ENCODE measurements at regions of chr5 and their contacts with region 1.

Region 1: GRCh38 chr5:143002459-143003328 is 232.5 kb downstream of the ARHGAP26 start:
- DNase-seq: peak; percentile 16 to 94 (median 58)
- ATAC-seq: peak; percentile 85
- H3K4me3 ChIP-seq: peak overlapping the region in 1 of 2 experiments; percentile 1
- H3K4me3 Mint-ChIP-seq: peak overlapping the region; percentile 56
- H3K27ac ChIP-seq: peak overlapping the region; percentile 83 to 89
- H3K27ac Mint-ChIP-seq: peak overlapping the region; percentile 87
- H3K4me1 ChIP-seq: peaks cover 43% of the 10 kb centered on the region
- H3K4me1 Mint-ChIP-seq: peaks cover 70% of the 10 kb centered on the region
- H3K27me3 ChIP-seq: no peaks in the 10 kb centered on the region
- H3K27me3 Mint-ChIP-seq: no peaks in the 10 kb centered on the region
- CTCF ChIP-seq: peak; percentile 70

Region 2: GRCh38 chr5:142922223-142922952 is 80.3 kb before region 1 on chr5:
- CTCF ChIA-PET with region 1: interaction called, 8 read pairs
- POLR2A ChIA-PET with region 1: interaction called, 11 read pairs
- intact Hi-C with region 1: no loop called
- DNase-seq: peak in 2 of 9 experiments; percentile 50 to 67
- ATAC-seq: no peak
- H3K4me3 ChIP-seq: no peak overlapping the region
- H3K4me3 Mint-ChIP-seq: no peak overlapping the region
- H3K27ac ChIP-seq: peak overlapping the region in 1 of 2 experiments; percentile 21
- H3K27ac Mint-ChIP-seq: peak overlapping the region; percentile 37
- H3K4me1 ChIP-seq: peaks cover 7% of the 10 kb centered on the region
- H3K4me1 Mint-ChIP-seq: peaks cover 34% of the 10 kb centered on the region
- H3K27me3 ChIP-seq: no peaks in the 10 kb centered on the region
- H3K27me3 Mint-ChIP-seq: no peaks in the 10 kb centered on the region
- CTCF ChIP-seq: no peak

Region 3: DNA sequence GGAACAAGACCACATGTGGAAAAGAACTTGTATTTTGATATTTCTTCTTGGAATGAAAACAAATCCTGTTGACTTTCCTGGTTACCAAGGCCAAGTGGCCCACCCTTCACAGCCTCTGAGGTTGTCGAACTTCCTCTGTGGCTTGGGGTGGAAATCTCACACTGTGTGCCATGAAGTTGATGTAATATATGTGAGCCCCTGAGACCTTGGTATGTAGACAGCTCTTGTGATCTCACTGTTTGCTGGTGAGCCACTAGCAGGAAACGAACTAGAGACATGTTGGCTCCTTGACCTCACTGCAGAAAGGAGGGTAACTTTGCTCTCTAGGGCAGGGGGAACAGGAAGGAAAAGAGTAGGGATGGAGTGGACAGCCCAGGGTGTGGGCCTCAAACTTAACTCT is 73.1 kb before region 1 on chr5:
- CTCF ChIA-PET with region 1: no interaction called
- POLR2A ChIA-PET with region 1: interaction called, 3 read pairs
- intact Hi-C with region 1: loop called in 1 of 2 experiments (anchors 2 kb)
- DNase-seq: peak in 8 of 9 experiments; percentile 11 to 87 (median 44)
- ATAC-seq: peak; percentile 77
- H3K4me3 ChIP-seq: no peak overlapping the region
- H3K4me3 Mint-ChIP-seq: no peak overlapping the region
- H3K27ac ChIP-seq: peak overlapping the region; percentile 27 to 72
- H3K27ac Mint-ChIP-seq: peak overlapping the region; percentile 90
- H3K4me1 ChIP-seq: peaks cover 13% of the 10 kb centered on the region
- H3K4me1 Mint-ChIP-seq: peaks cover 53% of the 10 kb centered on the region
- H3K27me3 ChIP-seq: no peaks in the 10 kb centered on the region
- H3K27me3 Mint-ChIP-seq: no peaks in the 10 kb centered on the region
- CTCF ChIP-seq: no peak

Region 4: DNA sequence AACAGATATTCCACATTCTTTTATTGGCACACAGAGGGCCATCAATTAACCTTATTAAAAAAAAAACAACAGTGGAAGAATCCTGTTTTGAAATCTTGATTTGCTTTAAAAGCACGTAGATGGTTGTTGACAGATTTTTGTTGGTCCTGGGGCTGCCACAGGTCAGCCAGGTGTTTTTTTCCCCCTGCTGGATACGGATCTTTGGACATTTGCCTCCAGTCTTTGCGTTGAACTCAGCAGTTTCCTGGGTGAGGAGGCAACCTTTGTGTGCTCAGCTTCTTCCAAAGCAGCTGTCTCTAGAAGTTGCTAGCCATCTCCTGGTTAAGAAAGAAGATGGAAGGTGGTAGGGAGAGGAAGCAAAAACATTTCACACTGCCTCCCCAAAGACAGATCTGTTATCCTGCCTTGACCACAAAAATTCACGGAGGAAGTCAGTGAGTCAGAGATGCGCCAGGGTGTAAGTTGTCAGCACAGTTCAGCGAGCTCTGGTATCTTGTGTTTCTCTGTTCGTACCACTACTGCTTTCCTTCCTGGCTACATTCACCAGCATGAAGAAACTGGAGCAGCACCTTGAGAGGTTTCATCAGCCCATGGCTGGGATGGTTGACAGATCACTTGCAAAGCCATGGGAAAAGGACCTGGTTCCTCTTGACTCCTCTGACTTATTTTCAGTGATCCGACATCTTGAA is 25.2 kb before region 1 on chr5:
- CTCF ChIA-PET with region 1: interaction called, 8 read pairs
- POLR2A ChIA-PET with region 1: interaction called, 9 read pairs
- intact Hi-C with region 1: loop called in 1 of 2 experiments (anchors 2 kb)
- DNase-seq: peak; percentile 22 to 93 (median 60)
- ATAC-seq: peak; percentile 94
- H3K4me3 ChIP-seq: no peak overlapping the region
- H3K4me3 Mint-ChIP-seq: peak overlapping the region; percentile 59
- H3K27ac ChIP-seq: peak overlapping the region; percentile 3 to 88
- H3K27ac Mint-ChIP-seq: peak overlapping the region; percentile 83
- H3K4me1 ChIP-seq: peaks cover 57% of the 10 kb centered on the region
- H3K4me1 Mint-ChIP-seq: peaks cover 80% of the 10 kb centered on the region
- H3K27me3 ChIP-seq: no peaks in the 10 kb centered on the region
- H3K27me3 Mint-ChIP-seq: no peaks in the 10 kb centered on the region
- CTCF ChIP-seq: no peak

Region 5: GRCh38 chr5:142984525-142984924 is 18.2 kb before region 1 on chr5:
- CTCF ChIA-PET with region 1: interaction called, 11 read pairs
- POLR2A ChIA-PET with region 1: interaction called, 8 read pairs
- intact Hi-C with region 1: no loop called
- DNase-seq: peak in 1 of 9 experiments; percentile 44
- ATAC-seq: peak; percentile 6
- H3K4me3 ChIP-seq: no peak overlapping the region
- H3K4me3 Mint-ChIP-seq: no peak overlapping the region
- H3K27ac ChIP-seq: no peak overlapping the region
- H3K27ac Mint-ChIP-seq: no peak overlapping the region
- H3K4me1 ChIP-seq: peaks cover 22% of the 10 kb centered on the region
- H3K4me1 Mint-ChIP-seq: peaks cover 49% of the 10 kb centered on the region
- H3K27me3 ChIP-seq: no peaks in the 10 kb centered on the region
- H3K27me3 Mint-ChIP-seq: no peaks in the 10 kb centered on the region
- CTCF ChIP-seq: no peak

Region 6: DNA sequence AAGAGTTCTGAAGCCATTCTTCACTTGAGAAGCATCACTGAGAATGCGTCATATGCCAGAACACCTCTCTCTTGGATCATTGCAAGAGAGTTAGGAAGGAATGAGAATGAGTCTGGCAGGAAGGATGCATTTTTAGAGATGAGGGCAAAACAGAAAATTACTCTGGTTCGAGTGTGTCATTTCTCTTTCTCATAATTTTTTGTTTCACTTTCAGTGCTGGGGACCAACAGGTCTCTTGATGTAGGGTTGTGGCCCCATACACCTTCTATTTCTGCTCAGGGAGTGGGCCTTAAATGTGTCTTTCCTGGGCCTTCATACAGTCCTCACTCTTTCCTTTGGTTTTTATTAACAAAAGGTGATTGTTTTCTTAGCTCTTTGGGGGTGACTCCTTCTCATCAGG is 98.4 kb after region 1 on chr5:
- CTCF ChIA-PET with region 1: no interaction called
- POLR2A ChIA-PET with region 1: no interaction called
- intact Hi-C with region 1: no loop called
- DNase-seq: peak in 1 of 9 experiments; percentile 26
- ATAC-seq: no peak
- H3K4me3 ChIP-seq: no peak overlapping the region
- H3K4me3 Mint-ChIP-seq: no peak overlapping the region
- H3K27ac ChIP-seq: peak overlapping the region in 1 of 2 experiments; percentile 50
- H3K27ac Mint-ChIP-seq: peak overlapping the region; percentile 57
- H3K4me1 ChIP-seq: no peaks in the 10 kb centered on the region
- H3K4me1 Mint-ChIP-seq: peaks cover 20% of the 10 kb centered on the region
- H3K27me3 ChIP-seq: no peaks in the 10 kb centered on the region
- H3K27me3 Mint-ChIP-seq: no peaks in the 10 kb centered on the region
- CTCF ChIP-seq: no peak

Region 7: DNA sequence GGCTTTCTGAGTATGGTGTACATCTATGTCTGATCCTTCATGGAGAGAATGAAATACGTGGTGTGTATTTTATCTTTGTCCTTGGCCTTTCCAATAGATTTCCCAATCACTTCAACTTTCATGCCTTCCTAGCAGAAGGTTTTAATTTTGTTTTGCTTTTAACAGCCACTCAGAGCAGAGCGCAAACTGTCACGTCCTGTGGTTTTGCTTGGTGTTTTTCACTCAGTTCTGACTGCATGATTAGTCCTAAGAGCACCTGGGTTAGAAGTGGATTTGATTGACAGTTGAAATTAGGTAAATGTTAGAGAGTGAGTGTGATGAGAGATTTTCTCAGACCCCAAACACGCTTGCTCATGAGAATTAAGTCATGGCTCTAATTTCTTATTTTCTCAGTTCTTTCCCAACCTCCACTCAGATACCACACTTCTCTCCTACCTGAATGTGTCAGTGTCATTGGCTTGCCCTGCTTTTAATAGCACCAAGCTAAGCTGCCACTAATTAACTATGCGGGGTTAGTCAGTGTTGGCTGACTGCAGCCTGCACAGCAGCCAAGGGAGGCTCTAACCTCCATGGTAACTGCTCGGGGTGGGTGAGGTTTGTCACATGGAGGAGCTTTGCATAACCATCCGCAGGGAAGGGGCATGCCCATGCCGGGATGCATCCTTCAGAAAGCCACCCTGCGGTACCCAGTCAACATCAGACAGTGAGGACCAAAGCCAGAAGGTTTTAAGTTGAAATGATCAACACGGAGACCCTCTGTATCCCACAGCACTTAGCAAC is 227.4 kb after region 1 on chr5:
- CTCF ChIA-PET with region 1: no interaction called
- POLR2A ChIA-PET with region 1: no interaction called
- intact Hi-C with region 1: loop called in 1 of 2 experiments (anchors 5 kb)
- DNase-seq: peak in 6 of 9 experiments; percentile 14 to 77 (median 52)
- ATAC-seq: peak; percentile 89
- H3K4me3 ChIP-seq: peak overlapping the region in 1 of 2 experiments; percentile 28
- H3K4me3 Mint-ChIP-seq: peak overlapping the region; percentile 75
- H3K27ac ChIP-seq: peak overlapping the region in 1 of 2 experiments; percentile 58
- H3K27ac Mint-ChIP-seq: peak overlapping the region; percentile 88
- H3K4me1 ChIP-seq: peaks cover 17% of the 10 kb centered on the region
- H3K4me1 Mint-ChIP-seq: peaks cover 29% of the 10 kb centered on the region
- H3K27me3 ChIP-seq: no peaks in the 10 kb centered on the region
- H3K27me3 Mint-ChIP-seq: no peaks in the 10 kb centered on the region
- CTCF ChIP-seq: no peak

Region 8: DNA sequence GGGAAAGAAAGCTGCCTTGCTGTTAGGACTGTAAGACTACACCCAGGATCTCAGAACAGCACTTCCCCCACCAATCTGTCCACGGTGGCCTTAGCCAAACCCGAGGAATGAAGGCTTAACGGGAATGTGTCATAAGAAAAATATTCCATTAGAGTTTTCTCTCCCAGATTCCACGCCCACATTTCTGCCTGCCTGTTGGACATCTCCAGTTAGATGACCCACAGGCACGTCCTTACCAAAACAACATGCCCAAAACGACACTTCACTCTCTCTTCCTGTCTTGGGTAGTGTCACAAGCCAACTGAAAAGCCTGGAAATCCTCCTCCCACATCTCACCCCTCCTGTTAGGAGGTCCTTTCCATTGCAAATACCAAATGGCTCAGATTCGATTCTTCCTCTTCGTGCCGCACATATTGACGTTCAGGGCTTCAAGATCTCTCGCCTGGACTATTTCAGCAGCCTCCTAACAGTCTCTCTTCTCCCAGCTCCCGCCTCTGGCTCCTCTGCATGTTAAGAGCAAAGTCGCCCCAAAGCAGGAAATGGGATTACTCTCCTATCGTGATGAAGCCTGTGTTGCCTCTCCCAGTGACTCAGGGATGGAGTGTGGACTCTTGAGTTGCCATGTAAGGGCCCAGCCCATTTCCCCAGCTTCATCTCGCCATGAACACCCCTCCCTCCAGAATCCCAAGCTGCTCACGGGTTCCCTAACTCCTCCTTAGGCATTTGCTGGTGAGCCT is 241.5 kb after region 1 on chr5:
- CTCF ChIA-PET with region 1: no interaction called
- POLR2A ChIA-PET with region 1: no interaction called
- intact Hi-C with region 1: no loop called
- DNase-seq: no peak
- ATAC-seq: no peak
- H3K4me3 ChIP-seq: no peak overlapping the region
- H3K4me3 Mint-ChIP-seq: no peak overlapping the region
- H3K27ac ChIP-seq: no peak overlapping the region
- H3K27ac Mint-ChIP-seq: no peak overlapping the region
- H3K4me1 ChIP-seq: no peaks in the 10 kb centered on the region
- H3K4me1 Mint-ChIP-seq: no peaks in the 10 kb centered on the region
- H3K27me3 ChIP-seq: no peaks in the 10 kb centered on the region
- H3K27me3 Mint-ChIP-seq: no peaks in the 10 kb centered on the region
- CTCF ChIP-seq: no peak

Region 9: GRCh38 chr5:143968011-143968878 is 965.6 kb after region 1 on chr5:
- CTCF ChIA-PET with region 1: no interaction called
- POLR2A ChIA-PET with region 1: no interaction called
- intact Hi-C with region 1: loop called in 1 of 2 experiments (anchors 10 kb)
- DNase-seq: peak in 2 of 9 experiments; percentile 27 to 52
- ATAC-seq: no peak
- H3K4me3 ChIP-seq: no peak overlapping the region
- H3K4me3 Mint-ChIP-seq: no peak overlapping the region
- H3K27ac ChIP-seq: no peak overlapping the region
- H3K27ac Mint-ChIP-seq: no peak overlapping the region
- H3K4me1 ChIP-seq: no peaks in the 10 kb centered on the region
- H3K4me1 Mint-ChIP-seq: no peaks in the 10 kb centered on the region
- H3K27me3 ChIP-seq: no peaks in the 10 kb centered on the region
- H3K27me3 Mint-ChIP-seq: peaks cover 8% of the 10 kb centered on the region
- CTCF ChIP-seq: no peak